ENCODE measurements at regions of chr4 and their contacts with region 1.

Region 1: DNA sequence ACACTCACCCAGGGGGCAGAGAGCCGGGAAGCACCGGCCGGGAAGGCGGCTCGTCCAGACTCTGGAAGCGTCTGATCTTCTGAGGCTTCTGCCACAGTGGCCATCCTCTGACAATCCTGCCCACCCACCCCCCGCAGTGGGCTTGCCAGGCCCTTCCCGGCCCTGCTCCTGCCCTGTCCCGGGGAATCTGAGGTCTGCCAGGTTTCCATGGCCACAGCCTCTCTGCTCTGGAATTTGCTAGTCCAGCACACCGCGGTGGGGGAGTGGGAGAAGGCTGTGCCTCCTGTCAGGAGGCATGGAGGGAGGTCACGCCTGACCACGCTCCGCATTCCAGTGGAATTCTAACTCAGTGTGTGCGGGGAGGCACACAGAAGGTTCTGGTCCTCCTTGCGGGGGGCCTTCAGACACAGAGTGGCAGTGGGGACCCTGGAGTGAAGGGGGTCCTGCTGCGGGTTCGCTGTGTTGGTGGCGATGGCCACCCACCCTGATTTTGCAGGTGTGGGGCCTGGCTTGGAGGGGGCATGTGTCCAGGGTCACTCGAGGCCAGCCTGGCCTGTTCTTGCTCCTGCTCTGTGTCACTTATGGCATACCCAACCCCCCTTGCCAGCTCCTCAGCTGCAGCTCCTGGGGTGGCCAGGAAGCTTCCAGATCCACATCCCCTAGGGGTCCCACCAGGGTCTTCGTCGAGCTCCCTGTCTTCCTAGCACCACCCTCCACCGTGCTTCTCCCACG is 55.6 kb upstream of the ADRA2C start:
- DNase-seq: no peak
- H3K4me3 ChIP-seq: no peak overlapping the region
- H3K27ac ChIP-seq: no peak overlapping the region
- H3K4me1 ChIP-seq: no peaks in the 10 kb centered on the region
- H3K27me3 ChIP-seq: no peaks in the 10 kb centered on the region
- CTCF ChIP-seq: no peak

Region 2: DNA sequence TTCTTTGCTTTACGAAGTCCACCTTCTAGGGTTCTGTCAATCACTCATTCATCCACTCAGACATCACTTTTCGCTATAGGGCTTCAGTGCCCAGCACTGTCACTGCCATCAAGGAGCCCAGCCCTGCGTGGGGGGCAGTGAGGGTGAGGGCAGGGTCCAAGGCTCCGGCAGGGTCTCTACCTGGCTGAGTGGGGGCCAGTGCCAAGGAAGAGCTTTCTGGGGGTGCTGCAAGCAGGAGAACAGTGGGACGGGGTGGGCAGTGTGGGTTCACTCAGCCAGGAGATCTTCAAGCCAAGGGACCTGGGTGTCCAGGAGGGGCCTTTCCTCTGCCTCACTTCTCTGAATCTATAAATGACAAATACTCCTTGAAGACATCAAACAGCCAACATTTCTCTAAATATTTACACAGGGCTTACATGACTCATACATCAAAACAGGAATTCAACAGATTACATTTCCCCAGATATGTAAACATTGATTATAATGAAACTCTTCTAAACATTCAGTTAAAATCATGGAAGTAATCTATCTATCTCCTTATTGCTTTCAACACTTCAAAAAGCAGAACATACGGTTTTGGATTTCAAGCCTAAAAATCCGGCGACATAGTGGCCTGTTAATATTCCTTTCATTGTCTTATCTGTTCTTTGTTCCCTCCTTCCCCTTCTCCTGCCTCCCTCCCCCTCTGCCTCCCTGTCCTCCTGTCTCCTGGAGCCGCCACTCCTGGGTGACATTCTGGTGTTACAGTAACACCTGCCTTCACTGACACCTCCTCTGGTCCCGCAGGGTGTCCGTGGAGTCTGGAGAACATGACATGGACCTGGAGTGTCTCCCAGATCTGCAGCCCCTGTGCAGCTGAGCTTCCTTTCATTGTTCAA is 38.8 kb before region 1 on chr4:
- CTCF ChIA-PET with region 1: no interaction called
- dilution Hi-C with region 1: loop called (anchors 5 kb)
- in situ Hi-C with region 1: no loop called
- intact Hi-C with region 1: no loop called
- DNase-seq: no peak
- H3K4me3 ChIP-seq: no peak overlapping the region
- H3K27ac ChIP-seq: no peak overlapping the region
- H3K4me1 ChIP-seq: no peaks in the 10 kb centered on the region
- H3K27me3 ChIP-seq: no peaks in the 10 kb centered on the region
- CTCF ChIP-seq: no peak